Naive thymus-derived CD4-positive, alpha-beta T cell (primary cell): ENCODE measurements at regions of chr17 and their contacts with region 1.

Region 1: GRCh38 chr17:38879878-38880682 is 10.2 kb downstream of the LASP1 start:
- DNase-seq: peak in 4 of 9 donors; percentile 34 to 44 (median 37)
- ATAC-seq: no peak
- H3K4me3 ChIP-seq: peak overlapping the region; percentile 47
- H3K4me3 Mint-ChIP-seq: peak overlapping the region; percentile 60 to 94 (median 80)
- H3K27ac ChIP-seq: peak overlapping the region; percentile 79
- H3K27ac Mint-ChIP-seq: peak overlapping the region; percentile 68 to 96 (median 94)
- H3K4me1 ChIP-seq: peaks cover 76 to 91% of the 10 kb centered on the region in 2 donors
- H3K4me1 Mint-ChIP-seq: peaks cover 66 to 95% (median 87%) of the 10 kb centered on the region in 7 donors
- H3K27me3 ChIP-seq: no peaks in the 10 kb centered on the region
- H3K27me3 Mint-ChIP-seq: no peaks in the 10 kb centered on the region

Region 2: GRCh38 chr17:38898812-38899348 is 18.8 kb after region 1 on chr17:
- CTCF ChIA-PET with region 1: interaction called, 3 read pairs
- POLR2A ChIA-PET with region 1: interaction called, 23 read pairs
- intact Hi-C with region 1: loop called in 1 of 2 experiments (anchors 2 kb)
- DNase-seq: peak; percentile 48 to 84 (median 73)
- ATAC-seq: peak; percentile 89
- H3K4me3 ChIP-seq: peak overlapping the region; percentile 46
- H3K4me3 Mint-ChIP-seq: peak overlapping the region; percentile 77 to 93 (median 83)
- H3K27ac ChIP-seq: peak overlapping the region; percentile 81
- H3K27ac Mint-ChIP-seq: peak overlapping the region; percentile 86 to 100 (median 98)
- H3K4me1 ChIP-seq: peaks cover 60 to 85% of the 10 kb centered on the region in 2 donors
- H3K4me1 Mint-ChIP-seq: peaks cover 30 to 71% (median 65%) of the 10 kb centered on the region in 7 donors
- H3K27me3 ChIP-seq: no peaks in the 10 kb centered on the region
- H3K27me3 Mint-ChIP-seq: no peaks in the 10 kb centered on the region